MCF 10A (cell line): ENCODE measurements at regions of chr13 and their contacts with region 1.

Region 1: DNA sequence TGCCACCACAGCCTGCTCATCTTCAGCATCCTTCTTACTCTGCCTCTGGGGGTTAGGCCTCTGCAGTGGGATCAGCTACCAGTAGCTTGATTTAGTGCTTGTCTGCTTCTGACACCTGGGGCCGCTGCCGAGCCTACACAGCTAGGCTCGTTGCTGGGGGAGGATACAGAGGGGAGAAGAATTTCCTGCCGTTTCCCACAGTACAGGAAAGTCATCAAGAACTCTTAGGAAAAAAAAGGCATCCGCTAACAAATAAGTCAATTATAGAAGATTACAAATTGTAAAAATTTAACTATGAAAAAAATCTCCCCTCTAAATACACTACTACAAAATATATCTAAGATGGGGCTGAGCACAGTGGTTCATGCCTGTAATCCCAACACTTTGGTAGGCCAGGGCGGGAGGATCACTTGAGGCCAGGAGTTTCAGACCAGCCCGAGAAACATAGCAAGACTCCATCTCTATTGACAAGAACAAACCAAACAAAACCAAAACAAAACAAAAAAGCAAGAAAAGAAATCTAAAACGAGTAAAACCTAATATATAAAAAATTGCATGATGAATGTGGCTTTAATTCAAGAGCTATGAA is 26.7 kb downstream of the LATS2 start:
- DNase-seq: no peak
- H3K4me3 Mint-ChIP-seq: no peak overlapping the region
- H3K27ac Mint-ChIP-seq: peak overlapping the region; percentile 97
- H3K4me1 Mint-ChIP-seq: peaks cover 47% of the 10 kb centered on the region
- H3K27me3 Mint-ChIP-seq: no peaks in the 10 kb centered on the region
- CTCF ChIP-seq: no peak

Region 2: GRCh38 chr13:21014502-21015170 is 20.1 kb before region 1 on chr13:
- CTCF ChIA-PET with region 1: interaction called, 3 read pairs
- POLR2A ChIA-PET with region 1: interaction called, 35 read pairs
- intact Hi-C with region 1: no loop called
- DNase-seq: peak; percentile 51
- H3K4me3 Mint-ChIP-seq: no peak overlapping the region
- H3K27ac Mint-ChIP-seq: peak overlapping the region; percentile 30
- H3K4me1 Mint-ChIP-seq: peaks cover 58% of the 10 kb centered on the region
- H3K27me3 Mint-ChIP-seq: no peaks in the 10 kb centered on the region
- CTCF ChIP-seq: no peak

Region 3: GRCh38 chr13:21060987-21061763 is 26.5 kb after region 1 on chr13 and contains the start of gene LATS2:
- CTCF ChIA-PET with region 1: interaction called, 3 read pairs
- POLR2A ChIA-PET with region 1: interaction called, 10 read pairs
- intact Hi-C with region 1: no loop called
- DNase-seq: peak; percentile 90
- H3K4me3 Mint-ChIP-seq: peak within 1 kb of the TSS; percentile 73
- H3K27ac Mint-ChIP-seq: peak within 1 kb of the TSS; percentile 86
- H3K4me1 Mint-ChIP-seq: peaks cover 18% of the 10 kb centered on the region
- H3K27me3 Mint-ChIP-seq: no peaks in the 10 kb centered on the region
- CTCF ChIP-seq: no peak
- total RNA-seq, gene LATS2: 28.7 and 32.3 TPM in 2 replicates

Region 4: DNA sequence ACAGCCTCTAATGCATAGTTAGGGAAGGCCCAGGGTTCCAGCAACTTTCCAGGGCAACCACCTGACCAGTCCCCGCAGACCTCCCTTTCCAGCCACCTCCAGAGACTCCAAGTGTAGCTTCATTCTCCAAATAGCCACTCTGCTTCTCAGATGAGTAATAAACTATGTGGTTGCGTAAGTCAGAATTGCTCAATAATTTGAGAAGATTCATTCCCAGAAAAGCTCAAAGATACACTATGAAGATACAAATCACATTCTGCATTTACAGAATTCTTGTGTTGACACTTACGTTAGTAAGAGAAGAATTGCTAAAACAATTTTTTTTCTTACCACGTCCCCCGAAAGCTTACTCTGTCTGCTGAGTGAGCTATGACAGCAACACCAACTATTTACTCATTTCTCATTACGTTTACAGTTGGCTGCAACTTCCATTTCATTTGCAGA is 34.9 kb after region 1 on chr13:
- CTCF ChIA-PET with region 1: interaction called, 3 read pairs
- POLR2A ChIA-PET with region 1: interaction called, 20 read pairs
- intact Hi-C with region 1: no loop called
- DNase-seq: peak; percentile 94
- H3K4me3 Mint-ChIP-seq: no peak overlapping the region
- H3K27ac Mint-ChIP-seq: peak overlapping the region; percentile 12
- H3K4me1 Mint-ChIP-seq: peaks cover 7% of the 10 kb centered on the region
- H3K27me3 Mint-ChIP-seq: no peaks in the 10 kb centered on the region
- CTCF ChIP-seq: no peak

Region 5: DNA sequence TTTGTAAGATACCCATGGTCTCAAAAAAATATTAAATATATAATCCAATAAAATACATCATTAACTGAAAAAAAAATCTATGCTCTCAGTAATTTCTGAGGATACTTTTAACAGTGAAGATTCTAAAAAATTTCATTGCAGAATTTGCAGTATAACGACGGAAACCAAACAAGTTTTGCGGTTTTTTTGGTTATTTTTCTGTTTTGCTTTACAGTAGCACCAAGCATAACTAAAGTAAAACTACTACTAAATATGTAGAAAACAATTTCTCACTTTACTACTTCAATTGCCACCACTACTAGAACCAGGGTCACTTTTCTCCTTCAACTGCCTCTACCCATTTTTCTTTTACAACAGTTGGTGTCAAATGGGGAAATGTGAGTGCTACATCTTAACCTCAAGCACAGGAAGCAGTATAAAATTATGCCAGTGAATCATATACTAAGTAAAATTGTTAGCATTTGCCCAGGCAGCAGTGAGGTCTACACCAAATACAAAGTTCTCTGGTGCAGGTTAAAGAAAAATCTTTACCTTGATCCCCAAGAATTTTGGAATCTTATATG is 545.1 kb after region 1 on chr13:
- CTCF ChIA-PET with region 1: no interaction called
- POLR2A ChIA-PET with region 1: no interaction called
- intact Hi-C with region 1: no loop called
- DNase-seq: no peak
- H3K4me3 Mint-ChIP-seq: no peak overlapping the region
- H3K27ac Mint-ChIP-seq: no peak overlapping the region
- H3K4me1 Mint-ChIP-seq: no peaks in the 10 kb centered on the region
- H3K27me3 Mint-ChIP-seq: no peaks in the 10 kb centered on the region
- CTCF ChIP-seq: no peak

Region 6: DNA sequence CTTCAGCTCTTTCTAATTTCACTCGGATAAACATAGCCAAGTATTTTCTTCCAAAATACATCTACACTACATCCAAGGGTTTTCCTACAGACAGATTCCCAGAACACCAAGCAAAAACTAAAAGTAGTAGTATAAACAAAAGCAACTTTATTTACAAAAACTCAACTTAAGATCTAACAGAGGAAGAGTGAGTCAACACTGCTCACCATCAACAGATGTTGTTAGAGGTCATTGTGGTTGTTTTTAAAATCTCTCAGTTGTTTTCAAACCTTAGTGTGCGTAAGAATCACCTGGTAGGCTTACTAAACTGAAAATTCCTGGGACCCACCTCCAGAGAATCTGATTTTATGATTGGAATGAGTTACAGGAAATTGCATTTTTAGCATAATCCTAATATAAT is 1514.4 kb after region 1 on chr13:
- CTCF ChIA-PET with region 1: no interaction called
- POLR2A ChIA-PET with region 1: no interaction called
- intact Hi-C with region 1: no loop called
- DNase-seq: no peak
- H3K4me3 Mint-ChIP-seq: no peak overlapping the region
- H3K27ac Mint-ChIP-seq: no peak overlapping the region
- H3K4me1 Mint-ChIP-seq: peaks cover 5% of the 10 kb centered on the region
- H3K27me3 Mint-ChIP-seq: no peaks in the 10 kb centered on the region
- CTCF ChIP-seq: no peak